Heart left ventricle (tissue), 16 donors: ENCODE measurements at regions of chr3 and their contacts with region 1.

Region 1: GRCh38 chr3:164018500-164018899 is 1059.8 kb downstream of the SI start:
- DNase-seq: no peak
- ATAC-seq: no peak
- H3K4me3 ChIP-seq: no peak overlapping the region
- H3K27ac ChIP-seq: no peak overlapping the region
- H3K4me1 ChIP-seq: no peaks in the 10 kb centered on the region
- H3K27me3 ChIP-seq: no peaks in the 10 kb centered on the region
- CTCF ChIP-seq: no peak
- POLR2A ChIP-seq: no peak

Region 2: GRCh38 chr3:163983948-163984347 is 34.6 kb before region 1 on chr3:
- intact Hi-C with region 1: no loop called
- DNase-seq: no peak
- ATAC-seq: no peak
- H3K4me3 ChIP-seq: no peak overlapping the region
- H3K27ac ChIP-seq: no peak overlapping the region
- H3K4me1 ChIP-seq: no peaks in the 10 kb centered on the region
- H3K27me3 ChIP-seq: no peaks in the 10 kb centered on the region
- CTCF ChIP-seq: no peak
- POLR2A ChIP-seq: no peak

Region 3: GRCh38 chr3:164064298-164064697 is 45.8 kb after region 1 on chr3:
- intact Hi-C with region 1: no loop called
- DNase-seq: no peak
- ATAC-seq: no peak
- H3K4me3 ChIP-seq: no peak overlapping the region
- H3K27ac ChIP-seq: no peak overlapping the region
- H3K4me1 ChIP-seq: no peaks in the 10 kb centered on the region
- H3K27me3 ChIP-seq: no peaks in the 10 kb centered on the region
- CTCF ChIP-seq: no peak
- POLR2A ChIP-seq: no peak

Region 4: GRCh38 chr3:164080208-164080607 is 61.7 kb after region 1 on chr3:
- intact Hi-C with region 1: loop called in 1 of 10 experiments (anchors 10 kb)
- DNase-seq: no peak
- ATAC-seq: no peak
- H3K4me3 ChIP-seq: no peak overlapping the region
- H3K27ac ChIP-seq: no peak overlapping the region
- H3K4me1 ChIP-seq: no peaks in the 10 kb centered on the region
- H3K27me3 ChIP-seq: no peaks in the 10 kb centered on the region
- CTCF ChIP-seq: no peak
- POLR2A ChIP-seq: no peak